CD8-positive, alpha-beta memory T cell (primary cell): ENCODE measurements at regions of chr4 and their contacts with region 1.

Region 1: GRCh38 chr4:185405296-185405999 is 8.8 kb downstream of the ANKRD37 start:
- DNase-seq: no peak
- H3K4me3 ChIP-seq: no peak overlapping the region
- H3K4me3 Mint-ChIP-seq: no peak overlapping the region
- H3K27ac ChIP-seq: no peak overlapping the region
- H3K27ac Mint-ChIP-seq: peak overlapping the region in 4 of 8 donors; percentile 9 to 63 (median 28)
- H3K4me1 ChIP-seq: no peaks in the 10 kb centered on the region
- H3K4me1 Mint-ChIP-seq: no peaks in the 10 kb centered on the region
- H3K27me3 ChIP-seq: no peaks in the 10 kb centered on the region
- H3K27me3 Mint-ChIP-seq: no peaks in the 10 kb centered on the region

Region 2: GRCh38 chr4:185471235-185472102 is 66.0 kb after region 1 on chr4 and contains the start of gene CCDC110:
- CTCF ChIA-PET with region 1: no interaction called
- POLR2A ChIA-PET with region 1: interaction called, 10 read pairs
- DNase-seq: peak; percentile 81 to 93 (median 84)
- H3K4me3 ChIP-seq: peak within 1 kb of the TSS; percentile 74
- H3K4me3 Mint-ChIP-seq: peak within 1 kb of the TSS; percentile 88 to 92 (median 92)
- H3K27ac ChIP-seq: peak within 1 kb of the TSS; percentile 38
- H3K27ac Mint-ChIP-seq: peak within 1 kb of the TSS; percentile 56 to 88 (median 84)
- H3K4me1 ChIP-seq: peaks cover 5% of the 10 kb centered on the region
- H3K4me1 Mint-ChIP-seq: peaks cover 7 to 11% (median 11%) of the 10 kb centered on the region in 3 donors
- H3K27me3 ChIP-seq: no peaks in the 10 kb centered on the region
- H3K27me3 Mint-ChIP-seq: peaks cover 0 to 5% of the 10 kb centered on the region in 2 donors
- total RNA-seq, gene CCDC110: not detected